Activated naive CD4-positive, alpha-beta T cell treated with anti-CD3 and anti-CD28 coated beads for 36 hours (primary cell): ENCODE measurements at regions of chr12 and their contacts with region 1.

Region 1: GRCh38 chr12:84874125-84874824 is 38.3 kb downstream of the SLC6A15 start:
- DNase-seq: no peak
- H3K4me3 Mint-ChIP-seq: no peak overlapping the region
- H3K27ac Mint-ChIP-seq: no peak overlapping the region
- H3K4me1 Mint-ChIP-seq: no peaks in the 10 kb centered on the region
- H3K27me3 Mint-ChIP-seq: no peaks in the 10 kb centered on the region

Region 2: GRCh38 chr12:84856156-84856900 is 17.9 kb before region 1 on chr12:
- CTCF ChIA-PET with region 1: no interaction called
- intact Hi-C with region 1: no loop called
- DNase-seq: no peak
- H3K4me3 Mint-ChIP-seq: no peak overlapping the region
- H3K27ac Mint-ChIP-seq: no peak overlapping the region
- H3K4me1 Mint-ChIP-seq: no peaks in the 10 kb centered on the region
- H3K27me3 Mint-ChIP-seq: peaks cover 5% of the 10 kb centered on the region

Region 3: DNA sequence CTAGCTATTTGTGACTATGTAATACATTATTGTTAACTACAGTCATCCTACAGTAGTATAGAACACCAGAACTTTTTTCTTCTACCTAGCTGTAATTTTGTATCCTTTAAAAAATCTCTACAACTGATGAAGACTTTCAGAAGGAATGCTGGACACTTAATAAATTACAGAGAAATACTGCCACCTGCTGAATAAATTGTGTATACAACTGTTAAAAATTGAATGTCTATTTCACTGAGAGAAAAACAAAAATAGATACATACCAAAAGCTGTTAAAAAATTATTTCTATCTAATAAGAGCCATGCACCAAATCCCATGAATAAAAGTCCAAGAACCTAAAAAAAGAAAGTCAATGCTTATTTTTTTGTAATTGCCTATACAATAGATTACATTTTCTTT is 155.2 kb after region 1 on chr12:
- CTCF ChIA-PET with region 1: interaction called, 39 read pairs
- intact Hi-C with region 1: loop called (anchors 1 kb)
- DNase-seq: no peak
- H3K4me3 Mint-ChIP-seq: no peak overlapping the region
- H3K27ac Mint-ChIP-seq: no peak overlapping the region
- H3K4me1 Mint-ChIP-seq: no peaks in the 10 kb centered on the region
- H3K27me3 Mint-ChIP-seq: peaks cover 3% of the 10 kb centered on the region

Region 4: GRCh38 chr12:85036241-85036707 is 162.0 kb after region 1 on chr12 and contains the starts of genes LRRIQ1 and TSPAN19:
- CTCF ChIA-PET with region 1: interaction called, 16 read pairs
- intact Hi-C with region 1: no loop called
- DNase-seq: peak; percentile 48
- H3K4me3 Mint-ChIP-seq: peak within 1 kb of the TSS; percentile 72
- H3K27ac Mint-ChIP-seq: no peak within 1 kb of the TSS
- H3K4me1 Mint-ChIP-seq: no peaks in the 10 kb centered on the region
- H3K27me3 Mint-ChIP-seq: peaks cover 9% of the 10 kb centered on the region
- total RNA-seq, gene LRRIQ1: not detected
- total RNA-seq, gene TSPAN19: not detected

Region 5: GRCh38 chr12:85057370-85057963 is 183.2 kb after region 1 on chr12:
- CTCF ChIA-PET with region 1: interaction called, 35 read pairs
- intact Hi-C with region 1: loop called (anchors 1 kb)
- DNase-seq: peak; percentile 39
- H3K4me3 Mint-ChIP-seq: no peak overlapping the region
- H3K27ac Mint-ChIP-seq: no peak overlapping the region
- H3K4me1 Mint-ChIP-seq: no peaks in the 10 kb centered on the region
- H3K27me3 Mint-ChIP-seq: no peaks in the 10 kb centered on the region